Dendritic cell treated with granulocyte-macrophage colony-stimulating factor and Interleukin-4, amounts not matched to agents 40 ng/mL and 50 ng/mL, for 4 days (primary cell): ENCODE measurements at regions of chr12 and their contacts with region 1.

Region 1: DNA sequence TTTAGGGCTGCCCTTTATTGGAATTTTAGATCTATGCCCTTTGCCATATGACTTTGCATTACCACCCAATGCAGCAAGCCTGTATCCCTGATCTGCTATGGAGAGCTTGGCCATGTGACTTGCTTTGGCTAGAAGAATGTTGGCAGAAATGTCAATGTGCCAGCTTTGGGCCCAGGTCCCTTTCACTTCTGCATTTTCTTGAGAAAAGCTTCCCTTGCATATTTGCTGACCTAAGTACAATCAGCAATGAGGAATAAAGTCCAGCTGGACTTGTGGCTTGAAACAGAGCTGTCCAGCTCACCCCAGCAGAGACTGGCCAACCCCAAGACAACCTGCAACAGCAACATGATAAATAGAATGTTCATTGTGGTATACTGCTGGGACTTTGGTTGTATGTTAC is 135.9 kb downstream of the PAH start:
- H3K4me3 Mint-ChIP-seq: no peak overlapping the region
- H3K27ac Mint-ChIP-seq: no peak overlapping the region
- H3K4me1 Mint-ChIP-seq: peaks cover under 1% of the 10 kb centered on the region
- H3K27me3 Mint-ChIP-seq: no peaks in the 10 kb centered on the region

Region 2: GRCh38 chr12:102376181-102376747 is 404.9 kb before region 1 on chr12:
- intact Hi-C with region 1: no loop called
- H3K4me3 Mint-ChIP-seq: no peak overlapping the region
- H3K27ac Mint-ChIP-seq: no peak overlapping the region
- H3K4me1 Mint-ChIP-seq: no peaks in the 10 kb centered on the region
- H3K27me3 Mint-ChIP-seq: no peaks in the 10 kb centered on the region

Region 3: GRCh38 chr12:102793921-102794320 is 12.8 kb after region 1 on chr12:
- intact Hi-C with region 1: loop called (anchors 1 kb)
- H3K4me3 Mint-ChIP-seq: no peak overlapping the region
- H3K27ac Mint-ChIP-seq: no peak overlapping the region
- H3K4me1 Mint-ChIP-seq: no peaks in the 10 kb centered on the region
- H3K27me3 Mint-ChIP-seq: no peaks in the 10 kb centered on the region